Activated naive CD4-positive, alpha-beta T cell treated with anti-CD3 and anti-CD28 coated beads for 36 hours (primary cell): ENCODE measurements at regions of chr13 and their contacts with region 1.

Region 1: GRCh38 chr13:40388617-40389016 is 277.8 kb downstream of the FOXO1 start:
- DNase-seq: peak; percentile 94
- H3K4me3 Mint-ChIP-seq: peak overlapping the region; percentile 77
- H3K27ac Mint-ChIP-seq: peak overlapping the region; percentile 92
- H3K4me1 Mint-ChIP-seq: peaks cover 51% of the 10 kb centered on the region
- H3K27me3 Mint-ChIP-seq: no peaks in the 10 kb centered on the region

Region 2: GRCh38 chr13:40026174-40026585 is 362.4 kb before region 1 on chr13:
- CTCF ChIA-PET with region 1: no interaction called
- intact Hi-C with region 1: loop called (anchors 1 kb)
- DNase-seq: peak; percentile 82
- H3K4me3 Mint-ChIP-seq: no peak overlapping the region
- H3K27ac Mint-ChIP-seq: no peak overlapping the region
- H3K4me1 Mint-ChIP-seq: peaks cover 33% of the 10 kb centered on the region
- H3K27me3 Mint-ChIP-seq: peaks cover 2% of the 10 kb centered on the region

Region 3: DNA sequence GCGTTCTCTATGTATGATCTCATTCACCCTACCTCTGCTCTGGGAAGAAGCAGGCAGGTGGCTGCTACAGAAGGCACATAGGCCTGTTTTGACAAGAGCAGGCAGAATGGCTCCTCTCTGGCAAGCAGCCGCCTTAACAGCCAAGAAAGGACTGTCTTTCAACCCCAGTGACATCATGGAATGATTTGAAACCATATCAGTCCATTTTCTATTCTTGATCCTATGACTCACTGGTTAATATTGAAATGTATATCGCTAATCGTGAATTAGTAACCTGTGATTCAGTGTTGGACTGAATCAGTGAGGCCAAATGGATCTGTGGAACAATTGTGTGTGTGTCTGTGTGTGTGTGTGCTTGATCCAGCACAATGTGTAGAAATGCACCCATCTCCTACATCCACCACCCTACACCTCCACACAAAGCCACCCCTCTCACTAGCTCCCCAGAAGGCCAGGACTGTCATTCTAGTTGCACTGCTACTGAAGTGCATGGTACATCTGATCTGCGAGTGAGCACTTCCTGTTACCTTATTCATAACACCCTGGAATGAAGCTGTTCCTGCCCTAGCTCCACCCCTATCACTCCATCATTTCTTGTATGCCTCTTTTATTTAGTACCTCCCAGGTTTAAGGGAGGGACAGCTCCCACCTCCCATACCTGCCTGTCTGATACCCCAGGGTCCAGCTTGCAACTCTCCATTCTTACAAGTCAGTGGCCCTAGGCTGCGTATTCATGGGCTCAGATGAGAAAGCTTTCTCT is 182.2 kb before region 1 on chr13:
- CTCF ChIA-PET with region 1: no interaction called
- intact Hi-C with region 1: loop called (anchors 1 kb)
- DNase-seq: peak; percentile 74
- H3K4me3 Mint-ChIP-seq: peak overlapping the region; percentile 64
- H3K27ac Mint-ChIP-seq: peak overlapping the region; percentile 100
- H3K4me1 Mint-ChIP-seq: peaks cover 73% of the 10 kb centered on the region
- H3K27me3 Mint-ChIP-seq: no peaks in the 10 kb centered on the region

Region 4: DNA sequence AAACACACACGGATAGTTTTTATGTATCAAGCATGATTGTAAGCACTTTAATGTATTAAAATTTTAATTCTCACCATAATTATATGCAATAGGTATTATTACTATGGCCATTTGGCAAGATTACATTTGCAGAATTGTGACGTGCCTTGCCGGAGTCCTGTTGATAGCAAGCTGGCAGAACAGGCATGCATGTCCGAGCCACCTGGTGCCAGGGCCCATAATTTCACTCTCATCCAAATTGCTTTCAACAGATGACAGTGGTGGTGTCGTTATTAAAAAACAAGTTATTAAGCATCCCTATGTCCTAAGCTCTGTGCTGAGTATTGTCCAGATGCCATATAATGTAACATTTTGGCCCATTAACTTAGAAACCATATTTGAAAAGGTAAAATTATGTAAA is 96.5 kb before region 1 on chr13:
- CTCF ChIA-PET with region 1: no interaction called
- intact Hi-C with region 1: no loop called
- DNase-seq: no peak
- H3K4me3 Mint-ChIP-seq: no peak overlapping the region
- H3K27ac Mint-ChIP-seq: no peak overlapping the region
- H3K4me1 Mint-ChIP-seq: peaks cover 22% of the 10 kb centered on the region
- H3K27me3 Mint-ChIP-seq: no peaks in the 10 kb centered on the region

Region 5: DNA sequence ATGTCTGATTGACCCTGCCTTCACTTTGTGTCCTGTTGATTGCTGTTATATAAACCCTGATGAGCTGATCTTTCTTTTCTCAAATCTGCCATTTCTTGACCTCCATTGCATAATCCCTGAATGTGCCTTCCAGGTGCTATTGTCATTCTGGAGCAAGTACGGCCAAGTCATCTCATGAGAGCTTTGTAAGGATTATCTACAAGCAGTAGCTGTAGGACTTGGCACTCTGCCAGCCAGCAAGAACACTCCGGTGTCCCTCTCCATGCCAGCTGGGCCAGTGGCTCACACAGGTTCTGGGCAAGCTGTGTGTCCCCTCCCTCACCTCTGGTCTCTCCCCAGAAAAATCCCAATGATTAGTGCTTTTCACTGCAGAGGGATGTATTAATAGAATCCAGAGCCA is 70.3 kb before region 1 on chr13:
- CTCF ChIA-PET with region 1: no interaction called
- intact Hi-C with region 1: loop called (anchors 2 kb)
- DNase-seq: peak; percentile 23
- H3K4me3 Mint-ChIP-seq: no peak overlapping the region
- H3K27ac Mint-ChIP-seq: no peak overlapping the region
- H3K4me1 Mint-ChIP-seq: peaks cover 64% of the 10 kb centered on the region
- H3K27me3 Mint-ChIP-seq: no peaks in the 10 kb centered on the region

Region 6: DNA sequence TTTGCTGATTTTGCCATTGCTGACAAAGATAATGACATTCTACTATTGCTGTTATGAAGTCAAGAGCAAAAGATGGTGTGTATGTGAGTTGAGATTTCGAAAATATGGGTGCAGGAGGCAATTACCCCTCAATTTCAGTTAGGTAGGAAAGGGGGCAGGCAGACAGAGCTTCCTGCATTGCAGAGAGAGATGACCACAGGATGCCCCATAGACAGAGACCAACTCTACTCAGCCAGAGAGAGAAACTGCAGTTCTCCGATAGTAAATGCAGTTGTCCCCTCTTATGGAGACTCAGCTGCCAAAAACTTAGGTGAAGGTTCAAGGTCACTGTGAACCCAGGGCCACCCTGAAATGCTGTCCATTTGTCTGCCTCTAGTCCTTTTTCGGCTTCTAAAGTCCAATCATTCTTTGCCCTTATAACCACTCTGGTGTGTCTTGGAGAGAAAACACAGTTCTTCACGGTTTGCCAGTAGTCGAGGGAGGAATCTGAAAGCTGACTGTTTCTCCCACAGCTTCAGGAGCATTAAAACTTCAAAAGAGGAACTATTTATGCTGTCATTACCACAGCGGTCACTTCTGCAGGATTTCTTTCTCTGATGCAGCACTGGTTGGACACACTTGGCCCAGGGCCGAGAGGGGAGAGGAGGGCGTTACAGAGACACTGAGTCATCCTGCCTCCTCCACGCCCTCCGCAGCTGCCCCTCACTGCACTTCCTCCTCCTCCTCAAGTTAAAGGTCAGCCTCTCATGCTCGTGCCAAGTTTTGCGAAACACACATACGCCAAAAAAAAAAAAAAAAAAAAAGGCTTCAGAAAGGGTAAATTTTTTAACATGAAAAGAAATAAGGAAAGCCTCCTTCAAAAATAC is 13.5 kb after region 1 on chr13:
- CTCF ChIA-PET with region 1: no interaction called
- intact Hi-C with region 1: loop called (anchors 1 kb)
- DNase-seq: peak; percentile 51
- H3K4me3 Mint-ChIP-seq: peak overlapping the region; percentile 11
- H3K27ac Mint-ChIP-seq: no peak overlapping the region
- H3K4me1 Mint-ChIP-seq: peaks cover 16% of the 10 kb centered on the region
- H3K27me3 Mint-ChIP-seq: no peaks in the 10 kb centered on the region

Region 7: GRCh38 chr13:40517486-40518480 is 129.2 kb after region 1 on chr13:
- CTCF ChIA-PET with region 1: no interaction called
- intact Hi-C with region 1: loop called (anchors 1 kb)
- DNase-seq: peak; percentile 57
- H3K4me3 Mint-ChIP-seq: peak overlapping the region; percentile 23
- H3K27ac Mint-ChIP-seq: peak overlapping the region; percentile 87
- H3K4me1 Mint-ChIP-seq: peaks cover 78% of the 10 kb centered on the region
- H3K27me3 Mint-ChIP-seq: no peaks in the 10 kb centered on the region